ENCODE measurements at regions of chr19 and their contacts with region 1.

Region 1: GRCh38 chr19:7522072-7522922 is at the start of gene MCOLN1:
- DNase-seq: peak; percentile 61
- H3K4me3 ChIP-seq: peak within 1 kb of the TSS; percentile 70
- H3K27me3 ChIP-seq: no peaks in the 10 kb centered on the region
- CTCF ChIP-seq: no peak
- polyA plus RNA-seq, gene MCOLN1: 24.6 and 50.6 TPM in 2 replicates

Region 2: DNA sequence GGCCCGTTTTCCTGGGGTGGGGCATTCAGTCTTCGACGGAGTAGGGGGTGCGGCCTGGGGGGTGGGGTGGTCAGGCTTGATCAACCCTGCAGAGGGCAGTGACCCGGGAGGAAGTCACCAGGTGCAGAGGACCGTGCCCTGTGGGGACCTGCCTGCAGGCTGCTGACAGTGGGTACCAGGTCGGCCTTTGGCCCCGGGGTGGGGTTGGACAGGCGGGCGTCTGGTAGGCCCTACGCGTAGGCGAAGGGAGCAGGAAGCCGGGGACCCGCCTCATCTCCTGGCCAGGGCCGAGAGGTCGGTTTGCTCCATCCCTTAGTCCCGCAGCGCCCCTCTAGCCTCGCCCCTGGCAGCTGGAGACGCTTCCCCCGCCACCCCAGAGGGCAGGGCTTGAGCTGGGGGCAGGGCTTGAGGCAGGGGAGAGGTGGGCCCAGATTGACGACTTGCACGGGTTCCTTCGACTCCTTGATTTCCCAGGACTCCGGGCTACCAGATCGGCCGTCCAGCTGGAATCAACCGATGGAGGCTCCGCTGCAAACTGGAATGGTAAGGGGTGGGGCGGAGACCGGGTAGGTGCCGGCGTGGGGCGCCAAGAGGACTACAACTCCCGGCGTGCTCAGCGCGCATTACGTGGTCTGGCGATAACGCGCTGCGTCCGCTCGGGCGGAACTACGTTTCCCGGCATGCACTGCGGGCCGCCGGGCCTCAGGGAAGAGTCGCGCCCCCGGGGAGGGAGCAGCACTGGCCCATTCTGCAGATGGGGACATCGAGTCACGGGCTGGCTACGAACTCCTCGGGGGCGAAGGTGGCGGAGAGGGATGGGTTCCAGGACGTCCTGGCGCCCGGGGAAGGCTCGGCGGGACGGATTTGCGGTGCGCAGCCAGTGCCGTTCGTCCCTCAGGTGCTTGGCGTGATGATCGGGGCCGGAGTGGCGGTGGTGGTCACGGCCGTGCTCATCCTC is 13.0 kb after region 1 on chr19 and contains the start of gene PNPLA6:
- CTCF ChIA-PET with region 1: interaction called, 12 read pairs
- POLR2A ChIA-PET with region 1: no interaction called
- DNase-seq: peak; percentile 57
- H3K4me3 ChIP-seq: peak within 1 kb of the TSS; percentile 86
- H3K27me3 ChIP-seq: no peaks in the 10 kb centered on the region
- CTCF ChIP-seq: no peak
- polyA plus RNA-seq, gene PNPLA6: 17.2 and 55.1 TPM in 2 replicates